Calu3 (cell line): ENCODE measurements at regions of chr1 and their contacts with region 1.

Region 1: DNA sequence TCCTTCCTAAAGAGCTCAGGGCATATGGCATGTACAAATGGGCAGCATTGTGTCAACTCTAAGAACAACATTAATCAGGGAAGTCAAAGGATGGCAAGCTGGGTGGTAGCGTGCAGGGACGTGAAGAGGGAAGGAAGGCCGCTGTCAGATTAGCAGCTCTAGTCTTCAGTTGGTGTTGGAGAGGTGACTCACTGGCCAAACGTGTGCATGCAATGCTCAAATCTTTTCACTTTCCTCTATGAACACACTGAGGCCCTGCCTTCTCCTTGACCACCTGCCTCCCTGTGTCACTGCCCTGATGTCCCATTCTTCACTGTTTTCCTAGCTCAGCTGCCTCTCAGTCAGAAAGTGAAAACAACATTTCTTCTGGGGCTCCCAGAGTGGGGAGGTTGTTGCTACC is 5.9 kb upstream of the PIGR start:
- DNase-seq: peak; percentile 74
- H3K4me3 Mint-ChIP-seq: peak overlapping the region; percentile 20
- H3K27ac Mint-ChIP-seq: peak overlapping the region; percentile 70
- H3K4me1 Mint-ChIP-seq: peaks cover 93% of the 10 kb centered on the region
- H3K27me3 Mint-ChIP-seq: no peaks in the 10 kb centered on the region
- CTCF ChIP-seq: no peak

Region 2: DNA sequence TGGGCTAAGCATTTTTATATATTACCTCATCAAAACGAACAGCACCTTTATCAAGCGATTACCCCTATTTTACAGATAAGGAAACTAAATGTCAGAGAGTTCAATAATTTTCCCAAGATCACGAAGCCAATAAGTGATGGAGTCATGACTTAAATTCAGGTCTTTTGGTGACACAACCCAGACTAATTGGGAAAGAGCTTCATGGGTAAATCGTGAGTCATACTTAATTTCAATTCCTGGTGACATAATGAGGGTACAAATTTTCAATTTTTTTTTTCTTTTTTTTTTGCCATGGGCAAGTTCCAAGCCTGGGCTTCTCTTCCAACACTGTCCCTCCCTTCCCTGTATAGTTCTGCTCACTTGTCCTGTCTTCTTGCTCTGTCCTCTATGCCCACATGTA is 149.8 kb before region 1 on chr1:
- CTCF ChIA-PET with region 1: interaction called, 13 read pairs
- intact Hi-C with region 1: no loop called
- DNase-seq: no peak
- H3K4me3 Mint-ChIP-seq: no peak overlapping the region
- H3K27ac Mint-ChIP-seq: no peak overlapping the region
- H3K4me1 Mint-ChIP-seq: no peaks in the 10 kb centered on the region
- H3K27me3 Mint-ChIP-seq: peaks cover 96% of the 10 kb centered on the region
- CTCF ChIP-seq: no peak

Region 3: DNA sequence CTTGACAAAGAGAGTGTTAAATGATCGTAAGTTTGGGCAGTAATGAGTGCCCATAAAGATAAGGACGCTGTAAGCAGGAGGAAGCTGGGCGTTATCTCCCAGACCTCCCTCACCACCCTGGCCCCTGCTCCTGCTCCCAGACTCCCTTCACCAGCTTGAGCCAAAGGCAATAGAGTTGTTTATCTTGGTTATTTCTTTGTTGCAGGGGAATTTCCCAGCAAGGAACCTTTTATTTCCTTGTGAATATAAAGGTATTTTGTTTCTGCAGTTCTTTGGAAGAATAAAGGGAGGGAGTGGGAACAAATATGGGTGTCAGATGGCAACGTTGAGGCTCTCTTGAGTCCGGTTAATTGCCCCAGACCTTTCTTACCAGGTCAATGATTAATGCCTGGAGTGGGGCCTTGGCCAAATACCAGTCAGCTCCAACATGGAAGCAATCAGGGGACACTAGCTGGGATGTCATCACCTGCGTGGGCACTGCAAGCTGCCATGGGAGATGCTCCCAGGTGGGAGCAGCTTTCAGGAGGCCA is 10.2 kb before region 1 on chr1:
- CTCF ChIA-PET with region 1: interaction called, 22 read pairs
- intact Hi-C with region 1: loop called (anchors 1 kb)
- DNase-seq: peak; percentile 81
- H3K4me3 Mint-ChIP-seq: peak overlapping the region; percentile 18
- H3K27ac Mint-ChIP-seq: peak overlapping the region; percentile 86
- H3K4me1 Mint-ChIP-seq: peaks cover 64% of the 10 kb centered on the region
- H3K27me3 Mint-ChIP-seq: no peaks in the 10 kb centered on the region
- CTCF ChIP-seq: no peak

Region 4: DNA sequence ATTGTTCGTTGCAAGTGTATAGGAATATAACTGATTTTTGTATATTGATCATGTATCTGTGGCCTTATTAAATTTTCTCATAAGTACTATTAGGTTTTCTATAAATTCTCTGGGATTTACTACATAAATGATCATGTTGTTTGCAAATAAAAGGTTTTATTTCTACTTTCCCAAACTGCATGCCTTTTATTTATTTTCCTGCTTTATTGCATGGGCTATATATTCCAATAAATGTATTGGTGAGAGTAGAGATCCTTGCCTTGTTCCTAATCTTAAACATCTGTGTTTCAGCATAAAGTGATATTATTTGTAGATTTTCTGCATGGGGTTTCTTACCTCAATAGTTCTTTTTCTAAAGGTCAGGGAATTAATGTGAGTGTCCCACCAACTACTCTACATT is 262.3 kb after region 1 on chr1:
- CTCF ChIA-PET with region 1: no interaction called
- intact Hi-C with region 1: no loop called
- DNase-seq: no peak
- H3K4me3 Mint-ChIP-seq: no peak overlapping the region
- H3K27ac Mint-ChIP-seq: no peak overlapping the region
- H3K4me1 Mint-ChIP-seq: peaks cover 16% of the 10 kb centered on the region
- H3K27me3 Mint-ChIP-seq: no peaks in the 10 kb centered on the region
- CTCF ChIP-seq: no peak